ENCODE measurements at regions of chr12 and their contacts with region 1.

Region 1: GRCh38 chr12:67355578-67356379 is 86.6 kb downstream of the CAND1 start:
- DNase-seq: peak; percentile 17
- H3K4me3 Mint-ChIP-seq: no peak overlapping the region
- H3K27ac Mint-ChIP-seq: no peak overlapping the region
- H3K4me1 Mint-ChIP-seq: peaks cover 25% of the 10 kb centered on the region
- H3K27me3 Mint-ChIP-seq: no peaks in the 10 kb centered on the region

Region 2: GRCh38 chr12:67441736-67442346 is 86.1 kb after region 1 on chr12:
- CTCF ChIA-PET with region 1: interaction called, 28 read pairs
- intact Hi-C with region 1: loop called (anchors 1 kb)
- DNase-seq: peak; percentile 93
- H3K4me3 Mint-ChIP-seq: peak overlapping the region; percentile 7
- H3K27ac Mint-ChIP-seq: no peak overlapping the region
- H3K4me1 Mint-ChIP-seq: peaks cover 19% of the 10 kb centered on the region
- H3K27me3 Mint-ChIP-seq: no peaks in the 10 kb centered on the region

Region 3: DNA sequence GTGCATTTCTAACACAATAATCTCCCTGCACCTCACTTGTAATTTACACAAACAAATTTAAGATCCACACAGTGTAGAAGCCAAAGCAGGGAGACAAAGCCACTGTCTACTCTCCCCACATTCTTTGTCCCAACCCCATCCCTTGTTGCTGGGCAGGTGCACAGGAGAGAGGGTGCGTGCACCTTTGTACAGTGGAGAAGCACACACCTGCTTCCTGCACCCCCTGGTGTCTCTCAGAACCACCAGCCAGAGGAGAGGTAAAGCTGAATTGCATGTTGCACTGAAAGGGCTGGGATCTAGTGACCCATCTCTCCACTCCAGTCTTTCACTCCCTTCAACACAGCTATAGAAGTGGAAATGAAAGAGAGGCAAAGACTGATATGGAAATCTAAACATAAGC is 582.1 kb after region 1 on chr12:
- CTCF ChIA-PET with region 1: interaction called, 36 read pairs
- intact Hi-C with region 1: loop called (anchors 1 kb)
- DNase-seq: peak; percentile 12
- H3K4me3 Mint-ChIP-seq: no peak overlapping the region
- H3K27ac Mint-ChIP-seq: no peak overlapping the region
- H3K4me1 Mint-ChIP-seq: no peaks in the 10 kb centered on the region
- H3K27me3 Mint-ChIP-seq: peaks cover 3% of the 10 kb centered on the region

Measured in activated naive CD4-positive, alpha-beta T cell treated with anti-CD3 and anti-CD28 coated beads for 36 hours (primary cell).